ENCODE measurements at regions of chr3 and their contacts with region 1.

Region 1: GRCh38 chr3:170317954-170318353 is 39.6 kb upstream of the SKIL start:
- DNase-seq: no peak
- H3K4me3 ChIP-seq: no peak overlapping the region
- H3K27ac ChIP-seq: no peak overlapping the region
- H3K4me1 ChIP-seq: no peaks in the 10 kb centered on the region
- H3K27me3 ChIP-seq: no peaks in the 10 kb centered on the region
- CTCF ChIP-seq: no peak

Region 2: DNA sequence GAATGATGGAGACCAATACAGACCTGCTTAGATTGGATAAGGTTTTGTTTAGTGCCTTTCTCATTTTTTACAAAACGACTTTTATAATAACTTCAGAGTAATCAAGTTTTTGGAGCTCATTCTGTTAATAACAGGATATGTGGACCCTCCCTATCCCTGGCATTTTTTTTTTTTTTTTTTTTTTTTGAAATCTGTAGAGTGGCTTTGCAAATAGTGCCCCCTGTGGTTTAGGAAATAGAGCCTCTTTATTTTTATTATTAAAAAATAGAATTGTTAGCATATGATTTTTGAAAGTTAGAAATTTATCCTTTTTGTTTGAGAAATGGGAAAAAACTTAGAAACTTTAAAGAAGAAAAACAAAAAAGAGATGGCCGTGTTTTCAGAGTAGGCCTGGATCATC is 51.0 kb after region 1 on chr3:
- intact Hi-C with region 1: loop called (anchors 10 kb)
- DNase-seq: no peak
- H3K4me3 ChIP-seq: no peak overlapping the region
- H3K27ac ChIP-seq: no peak overlapping the region
- H3K4me1 ChIP-seq: no peaks in the 10 kb centered on the region
- H3K27me3 ChIP-seq: no peaks in the 10 kb centered on the region
- CTCF ChIP-seq: no peak

Region 3: GRCh38 chr3:170811928-170812591 is 494.1 kb after region 1 on chr3:
- intact Hi-C with region 1: loop called (anchors 10 kb)
- DNase-seq: peak; percentile 82
- H3K4me3 ChIP-seq: no peak overlapping the region
- H3K27ac ChIP-seq: no peak overlapping the region
- H3K4me1 ChIP-seq: no peaks in the 10 kb centered on the region
- H3K27me3 ChIP-seq: no peaks in the 10 kb centered on the region
- CTCF ChIP-seq: peak; percentile 90

Measured in colonic mucosa (tissue), 4 donors.